CD14-positive monocyte (primary cell): ENCODE measurements at regions of chr17 and their contacts with region 1.

Region 1: GRCh38 chr17:35448214-35448898 is at the start of gene SLFN13:
- DNase-seq: peak; percentile 71 to 85 (median 72)
- H3K4me3 ChIP-seq: peak within 1 kb of the TSS; percentile 63 to 90 (median 72)
- H3K4me3 Mint-ChIP-seq: peak within 1 kb of the TSS; percentile 92 to 98
- H3K27ac ChIP-seq: peak within 1 kb of the TSS; percentile 11 to 65
- H3K27ac Mint-ChIP-seq: peak within 1 kb of the TSS; percentile 35 to 72 (median 67)
- H3K4me1 ChIP-seq: peaks cover 22% of the 10 kb centered on the region in 2 donors
- H3K4me1 Mint-ChIP-seq: peaks cover 23% of the 10 kb centered on the region
- H3K27me3 ChIP-seq: peaks cover 0 to 15% of the 10 kb centered on the region in 2 donors
- H3K27me3 Mint-ChIP-seq: peaks cover 16 to 39% (median 20%) of the 10 kb centered on the region in 3 donors
- CTCF ChIP-seq: no peak
- polyA plus RNA-seq, gene SLFN13: 1.8 to 3.0 (median 2.7) TPM

Region 2: GRCh38 chr17:34826332-34826731 is 622.0 kb before region 1 on chr17:
- intact Hi-C with region 1: no loop called
- DNase-seq: no peak
- H3K4me3 ChIP-seq: no peak overlapping the region
- H3K4me3 Mint-ChIP-seq: no peak overlapping the region
- H3K27ac ChIP-seq: no peak overlapping the region
- H3K27ac Mint-ChIP-seq: no peak overlapping the region
- H3K4me1 ChIP-seq: no peaks in the 10 kb centered on the region
- H3K4me1 Mint-ChIP-seq: no peaks in the 10 kb centered on the region
- H3K27me3 ChIP-seq: no peaks in the 10 kb centered on the region
- H3K27me3 Mint-ChIP-seq: peaks cover 0 to 15% (median 4%) of the 10 kb centered on the region in 3 donors
- CTCF ChIP-seq: no peak

Region 3: GRCh38 chr17:35312790-35313711 is 135.3 kb before region 1 on chr17:
- intact Hi-C with region 1: loop called in 1 of 2 experiments (anchors 10 kb)
- DNase-seq: peak; percentile 66 to 77 (median 71)
- H3K4me3 ChIP-seq: peak overlapping the region; percentile 48 to 85 (median 56)
- H3K4me3 Mint-ChIP-seq: peak overlapping the region; percentile 93 to 95
- H3K27ac ChIP-seq: peak overlapping the region in 1 of 2 donors; percentile 86
- H3K27ac Mint-ChIP-seq: peak overlapping the region; percentile 43 to 92 (median 83)
- H3K4me1 ChIP-seq: peaks cover 18 to 26% of the 10 kb centered on the region in 2 donors
- H3K4me1 Mint-ChIP-seq: peaks cover 27% of the 10 kb centered on the region
- H3K27me3 ChIP-seq: no peaks in the 10 kb centered on the region
- H3K27me3 Mint-ChIP-seq: peaks cover 1 to 4% (median 3%) of the 10 kb centered on the region in 3 donors
- CTCF ChIP-seq: peak; percentile 84

Region 4: GRCh38 chr17:35373534-35373983 is 74.8 kb before region 1 on chr17 and contains the start of gene SLFN11:
- intact Hi-C with region 1: loop called in 1 of 2 experiments (anchors 5 kb)
- DNase-seq: peak; percentile 68 to 88 (median 77)
- H3K4me3 ChIP-seq: peak within 1 kb of the TSS; percentile 77 to 94 (median 92)
- H3K4me3 Mint-ChIP-seq: peak within 1 kb of the TSS; percentile 98
- H3K27ac ChIP-seq: peak within 1 kb of the TSS; percentile 95 to 99
- H3K27ac Mint-ChIP-seq: peak within 1 kb of the TSS; percentile 98 to 100 (median 99)
- H3K4me1 ChIP-seq: peaks cover 61 to 90% of the 10 kb centered on the region in 2 donors
- H3K4me1 Mint-ChIP-seq: peaks cover 66% of the 10 kb centered on the region
- H3K27me3 ChIP-seq: no peaks in the 10 kb centered on the region
- H3K27me3 Mint-ChIP-seq: peaks cover 0 to 2% (median 0%) of the 10 kb centered on the region in 3 donors
- CTCF ChIP-seq: no peak
- polyA plus RNA-seq, gene SLFN11: 34.3 to 46.8 (median 45.6) TPM

Region 5: GRCh38 chr17:35460354-35460851 is 12.0 kb after region 1 on chr17:
- intact Hi-C with region 1: no loop called
- DNase-seq: peak in 1 of 3 donors; percentile 10
- H3K4me3 ChIP-seq: peak overlapping the region in 2 of 3 experiments; percentile 17 to 63
- H3K4me3 Mint-ChIP-seq: peak overlapping the region; percentile 53 to 86
- H3K27ac ChIP-seq: no peak overlapping the region
- H3K27ac Mint-ChIP-seq: no peak overlapping the region
- H3K4me1 ChIP-seq: peaks cover 6 to 12% of the 10 kb centered on the region in 2 donors
- H3K4me1 Mint-ChIP-seq: peaks cover 16% of the 10 kb centered on the region
- H3K27me3 ChIP-seq: peaks cover 37 to 58% of the 10 kb centered on the region in 2 donors
- H3K27me3 Mint-ChIP-seq: peaks cover 43 to 60% (median 59%) of the 10 kb centered on the region in 3 donors
- CTCF ChIP-seq: no peak

Region 6: DNA sequence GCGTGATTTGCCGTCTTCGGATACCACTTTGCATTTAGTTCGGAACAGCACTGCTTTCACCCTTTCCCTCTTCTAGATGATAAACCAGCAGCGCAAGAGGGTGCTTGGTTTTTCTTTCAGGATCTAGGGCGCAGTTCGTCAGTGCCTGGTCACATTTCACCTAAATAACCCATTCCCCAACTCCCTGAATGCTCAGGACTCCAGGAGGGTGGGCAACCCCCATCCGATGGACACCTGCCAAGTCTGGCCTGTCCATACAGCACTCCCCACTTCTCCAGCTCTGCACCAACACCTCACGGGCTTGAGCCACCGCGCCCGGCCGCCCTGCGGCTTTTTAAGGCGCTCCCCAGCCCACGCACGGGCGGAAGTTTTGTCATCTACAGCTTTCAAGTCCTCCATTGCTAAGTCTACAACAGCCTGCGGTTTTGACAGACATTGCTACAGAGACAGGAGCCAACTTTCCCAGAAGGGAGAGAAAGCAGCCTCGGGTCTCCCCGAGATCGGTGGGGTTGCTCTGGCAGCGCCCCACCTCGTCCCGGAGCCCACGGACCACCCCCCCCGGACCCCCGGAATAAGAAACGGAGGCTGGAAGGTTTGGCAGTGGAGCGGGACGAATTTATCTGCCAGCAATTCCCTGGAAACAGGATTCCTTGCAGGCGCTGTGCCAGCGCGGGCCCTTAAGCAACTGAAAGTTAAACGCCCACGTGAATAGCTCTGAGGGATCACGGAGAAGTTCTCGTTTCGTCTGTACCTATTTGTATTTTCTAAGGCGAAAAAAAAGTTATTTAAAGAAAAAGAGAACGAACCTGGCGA is 38.8 kb after region 1 on chr17:
- intact Hi-C with region 1: loop called in 1 of 2 experiments (anchors 5 kb)
- DNase-seq: peak; percentile 63 to 76 (median 74)
- H3K4me3 ChIP-seq: peak overlapping the region; percentile 56 to 92 (median 67)
- H3K4me3 Mint-ChIP-seq: peak overlapping the region; percentile 96
- H3K27ac ChIP-seq: peak overlapping the region; percentile 16 to 83
- H3K27ac Mint-ChIP-seq: peak overlapping the region; percentile 54 to 91 (median 77)
- H3K4me1 ChIP-seq: peaks cover 17 to 34% of the 10 kb centered on the region in 2 donors
- H3K4me1 Mint-ChIP-seq: peaks cover 36% of the 10 kb centered on the region
- H3K27me3 ChIP-seq: peaks cover 47 to 70% of the 10 kb centered on the region in 2 donors
- H3K27me3 Mint-ChIP-seq: peaks cover 67 to 78% (median 73%) of the 10 kb centered on the region in 3 donors
- CTCF ChIP-seq: no peak